Activated CD4-positive, alpha-beta memory T cell treated with anti-CD3 and anti-CD28 coated beads for 36 hours (primary cell): ENCODE measurements at regions of chr2 and their contacts with region 1.

Region 1: GRCh38 chr2:70124983-70125480 is 37.8 kb downstream of the PCBP1 start:
- DNase-seq: peak; percentile 67
- H3K4me3 Mint-ChIP-seq: peak overlapping the region; percentile 92
- H3K27ac Mint-ChIP-seq: peak overlapping the region; percentile 98
- H3K4me1 Mint-ChIP-seq: peaks cover 62% of the 10 kb centered on the region
- H3K27me3 Mint-ChIP-seq: no peaks in the 10 kb centered on the region

Region 2: DNA sequence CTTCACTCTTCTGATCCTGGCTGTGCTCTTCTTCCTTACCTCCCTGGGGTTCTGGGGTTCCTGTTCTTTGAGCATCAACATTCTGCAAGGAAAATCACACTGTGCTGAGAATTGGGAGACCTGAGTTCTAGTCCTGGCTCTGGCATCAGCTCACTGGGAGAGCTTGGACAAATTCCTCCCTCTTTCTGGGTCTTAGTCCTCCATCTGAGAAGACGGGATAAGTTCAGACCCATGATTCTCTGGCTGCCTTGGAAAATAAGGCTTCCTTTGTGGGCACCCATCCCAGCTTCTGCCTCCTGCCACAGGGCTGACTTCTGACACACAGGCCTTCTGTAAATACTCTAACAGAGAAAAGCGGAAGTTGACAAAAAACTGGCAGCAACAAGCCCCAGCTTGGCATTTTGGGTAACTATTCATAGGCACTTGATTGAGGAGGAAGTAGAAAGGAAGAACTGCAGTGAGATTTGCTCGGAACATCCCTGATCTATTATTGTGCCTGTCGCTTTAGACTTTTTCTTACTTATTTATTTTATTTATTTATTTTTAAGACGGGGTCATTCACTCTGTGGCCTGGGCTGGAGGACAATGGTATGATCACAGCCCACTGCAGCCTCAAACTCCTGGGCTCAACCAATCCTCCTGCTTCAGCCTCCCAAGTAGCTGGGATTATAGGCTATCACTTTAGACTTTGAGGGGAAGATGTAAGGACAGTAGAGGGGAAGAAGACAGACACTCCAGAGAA is 29.9 kb before region 1 on chr2:
- CTCF ChIA-PET with region 1: interaction called, 5 read pairs
- POLR2A ChIA-PET with region 1: interaction called, 19 read pairs
- intact Hi-C with region 1: no loop called
- DNase-seq: peak; percentile 69
- H3K4me3 Mint-ChIP-seq: peak overlapping the region; percentile 64
- H3K27ac Mint-ChIP-seq: peak overlapping the region; percentile 91
- H3K4me1 Mint-ChIP-seq: peaks cover 53% of the 10 kb centered on the region
- H3K27me3 Mint-ChIP-seq: no peaks in the 10 kb centered on the region

Region 3: DNA sequence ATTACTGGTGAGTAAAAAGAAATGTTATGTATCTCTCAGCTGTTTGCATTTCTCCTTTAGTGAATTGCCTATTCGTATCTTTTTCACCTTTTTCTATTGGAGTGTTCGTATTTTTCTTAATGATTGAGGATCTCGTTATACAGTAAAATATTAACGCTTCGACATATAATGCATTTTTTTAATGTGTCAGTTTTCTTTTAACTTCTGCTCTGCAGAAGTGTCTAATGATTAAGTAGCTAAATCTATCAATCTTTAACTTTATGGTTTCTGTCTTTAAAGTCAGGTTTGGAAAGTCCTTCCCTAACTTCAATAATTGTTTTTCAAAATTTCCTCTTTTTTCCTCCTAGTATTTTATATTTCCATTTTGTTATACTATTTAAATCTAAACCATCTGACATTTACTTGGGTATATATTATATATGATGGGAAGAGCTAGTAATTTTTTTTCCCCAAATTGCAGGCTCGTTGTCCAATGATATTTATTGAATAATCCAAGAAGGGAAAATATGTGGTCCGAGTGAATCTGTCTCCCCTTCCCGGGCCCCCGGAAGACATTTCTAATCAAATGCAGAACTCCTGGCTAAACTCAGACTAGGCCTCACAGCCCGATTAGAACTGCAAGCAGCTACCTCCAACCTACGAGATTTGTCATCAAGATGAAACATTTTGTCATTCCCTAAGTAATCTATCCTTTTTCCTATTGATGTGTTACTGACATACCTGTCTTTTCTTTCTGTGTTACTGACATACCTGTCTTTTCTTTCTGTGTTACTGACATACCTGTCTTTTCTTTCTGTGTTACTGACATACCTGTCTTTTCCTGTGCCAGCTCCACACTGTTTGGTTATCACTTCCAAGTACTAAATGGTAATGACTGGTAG is 20.6 kb before region 1 on chr2:
- CTCF ChIA-PET with region 1: interaction called, 10 read pairs
- POLR2A ChIA-PET with region 1: interaction called, 61 read pairs
- intact Hi-C with region 1: loop called (anchors 1 kb)
- DNase-seq: peak; percentile 71
- H3K4me3 Mint-ChIP-seq: peak overlapping the region; percentile 70
- H3K27ac Mint-ChIP-seq: peak overlapping the region; percentile 95
- H3K4me1 Mint-ChIP-seq: peaks cover 52% of the 10 kb centered on the region
- H3K27me3 Mint-ChIP-seq: no peaks in the 10 kb centered on the region

Region 4: DNA sequence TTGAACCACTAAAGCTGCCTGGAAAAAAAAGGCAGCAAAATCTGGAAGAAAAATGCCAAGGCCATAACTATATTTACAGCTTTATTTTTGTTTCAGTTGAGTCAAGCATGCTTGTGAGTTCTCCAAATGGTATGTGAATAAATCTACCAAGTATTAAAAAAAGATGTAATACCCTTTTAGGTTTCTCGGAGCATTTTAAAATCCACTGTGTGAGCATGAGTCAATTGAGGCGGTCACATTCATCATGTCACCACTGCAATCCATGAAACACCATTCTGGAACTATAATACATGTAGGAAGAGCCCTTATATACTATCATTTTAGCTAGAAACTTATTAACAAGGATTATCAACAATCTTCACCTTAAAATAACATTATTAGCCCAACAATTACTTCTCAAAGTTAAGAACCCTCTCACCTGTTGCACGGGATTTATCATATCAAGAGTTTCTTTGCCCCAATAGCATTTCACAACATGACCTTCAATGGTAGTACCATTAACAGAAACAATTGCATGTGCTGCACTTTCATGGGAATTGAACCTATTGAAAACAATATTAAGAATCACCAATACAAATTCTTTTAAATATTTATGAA is 90.0 kb after region 1 on chr2:
- CTCF ChIA-PET with region 1: no interaction called
- POLR2A ChIA-PET with region 1: no interaction called
- intact Hi-C with region 1: no loop called
- DNase-seq: no peak
- H3K4me3 Mint-ChIP-seq: no peak overlapping the region
- H3K27ac Mint-ChIP-seq: no peak overlapping the region
- H3K4me1 Mint-ChIP-seq: peaks cover 27% of the 10 kb centered on the region
- H3K27me3 Mint-ChIP-seq: no peaks in the 10 kb centered on the region